Right ventricle myocardium inferior (tissue), 1 donor: ENCODE measurements at regions of chr7 and their contacts with region 1.

Region 1: GRCh38 chr7:44490351-44491200 is at the start of gene NUDCD3:
- DNase-seq: peak; percentile 93
- ATAC-seq: peak; percentile 96
- total RNA-seq, gene NUDCD3: 112 TPM

Region 2: GRCh38 chr7:44065436-44066118 is 425.0 kb before region 1 on chr7 and contains the start of gene PGAM2:
- intact Hi-C with region 1: loop called (anchors 10 kb)
- DNase-seq: peak; percentile 88
- ATAC-seq: peak; percentile 78
- total RNA-seq, gene PGAM2: 1,123 TPM

Region 3: GRCh38 chr7:44131173-44132029 is 359.2 kb before region 1 on chr7:
- intact Hi-C with region 1: loop called (anchors 10 kb)
- DNase-seq: peak; percentile 53
- ATAC-seq: peak; percentile 73

Region 4: DNA sequence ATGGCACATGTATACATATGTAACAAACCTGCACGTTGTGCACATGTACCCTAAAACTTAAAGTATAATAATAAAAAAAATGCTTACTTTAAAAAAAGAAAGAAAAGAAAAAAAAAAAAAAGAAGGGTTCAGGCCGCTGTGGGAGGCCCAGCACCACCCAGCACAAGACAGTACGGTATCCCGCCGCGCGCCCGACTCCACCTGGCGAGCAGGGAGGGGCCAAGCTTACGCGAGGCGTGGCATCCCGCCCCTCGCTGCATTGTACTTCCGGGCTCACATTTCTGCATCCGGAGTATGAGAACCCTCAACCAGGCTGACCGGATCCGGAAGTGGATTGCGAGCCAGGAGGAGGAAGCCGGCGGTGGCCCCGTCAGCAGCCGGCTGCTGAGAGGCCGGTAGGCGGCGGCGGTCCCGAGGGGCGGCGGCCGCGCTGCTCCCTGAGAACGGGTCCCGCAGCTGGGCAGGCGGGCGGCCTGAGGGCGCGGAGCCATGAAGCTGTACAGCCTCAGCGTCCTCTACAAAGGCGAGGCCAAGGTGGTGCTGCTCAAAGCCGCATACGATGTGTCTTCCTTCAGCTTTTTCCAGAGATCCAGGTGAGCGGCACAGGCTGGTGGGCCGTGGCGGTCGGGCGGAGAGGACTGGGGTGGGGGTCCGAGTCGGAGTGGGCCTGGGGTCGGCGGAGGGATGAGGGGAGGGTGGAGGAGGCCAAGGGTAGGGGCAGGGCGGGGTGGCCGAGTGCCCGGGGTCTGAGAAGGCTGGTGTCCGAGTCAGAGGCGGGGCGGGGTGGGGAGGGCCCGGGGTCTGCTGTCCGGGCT is 289.7 kb before region 1 on chr7 and contains the start of gene YKT6:
- intact Hi-C with region 1: loop called (anchors 1 kb)
- DNase-seq: peak; percentile 96
- ATAC-seq: peak; percentile 98
- total RNA-seq, gene YKT6: 58.0 TPM

Region 5: DNA sequence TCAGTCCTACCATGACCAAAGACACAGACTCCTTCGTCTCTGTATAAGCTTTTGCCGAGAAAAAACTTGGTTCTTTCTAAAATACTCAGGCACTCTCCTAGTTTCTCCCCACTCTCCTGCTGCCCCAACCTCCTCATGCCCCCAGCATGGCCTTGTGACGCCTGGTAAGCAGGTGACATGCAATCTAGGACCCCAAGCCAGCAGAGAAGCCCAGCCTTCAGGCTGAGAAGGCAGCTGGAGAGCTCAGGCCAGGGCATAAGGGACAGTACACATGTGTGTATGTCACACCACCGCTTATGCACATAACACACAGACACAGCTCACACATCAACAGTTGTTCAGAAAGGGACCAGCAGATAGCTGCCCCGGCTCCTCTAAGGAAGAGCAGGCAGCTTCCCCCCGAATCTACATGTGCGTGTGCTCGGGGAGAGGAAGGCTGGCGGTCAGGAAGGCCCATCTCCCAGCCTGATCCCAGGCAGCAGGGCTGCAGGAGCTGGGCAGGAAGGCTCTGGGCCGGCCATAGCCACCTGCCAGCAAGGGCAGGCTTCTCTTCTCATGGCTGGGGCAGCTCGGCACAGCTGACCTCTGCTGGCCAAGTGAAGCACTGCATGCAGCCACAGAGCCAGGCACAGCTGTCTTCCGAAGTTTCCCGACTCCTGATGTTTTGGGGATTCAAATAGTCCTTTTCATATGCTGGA is 74.7 kb after region 1 on chr7:
- intact Hi-C with region 1: loop called (anchors 5 kb)
- DNase-seq: peak; percentile 84
- ATAC-seq: peak; percentile 83